Activated naive CD4-positive, alpha-beta T cell treated with anti-CD3 and anti-CD28 coated beads for 36 hours (primary cell): ENCODE measurements at regions of chr12 and their contacts with region 1.

Region 1: DNA sequence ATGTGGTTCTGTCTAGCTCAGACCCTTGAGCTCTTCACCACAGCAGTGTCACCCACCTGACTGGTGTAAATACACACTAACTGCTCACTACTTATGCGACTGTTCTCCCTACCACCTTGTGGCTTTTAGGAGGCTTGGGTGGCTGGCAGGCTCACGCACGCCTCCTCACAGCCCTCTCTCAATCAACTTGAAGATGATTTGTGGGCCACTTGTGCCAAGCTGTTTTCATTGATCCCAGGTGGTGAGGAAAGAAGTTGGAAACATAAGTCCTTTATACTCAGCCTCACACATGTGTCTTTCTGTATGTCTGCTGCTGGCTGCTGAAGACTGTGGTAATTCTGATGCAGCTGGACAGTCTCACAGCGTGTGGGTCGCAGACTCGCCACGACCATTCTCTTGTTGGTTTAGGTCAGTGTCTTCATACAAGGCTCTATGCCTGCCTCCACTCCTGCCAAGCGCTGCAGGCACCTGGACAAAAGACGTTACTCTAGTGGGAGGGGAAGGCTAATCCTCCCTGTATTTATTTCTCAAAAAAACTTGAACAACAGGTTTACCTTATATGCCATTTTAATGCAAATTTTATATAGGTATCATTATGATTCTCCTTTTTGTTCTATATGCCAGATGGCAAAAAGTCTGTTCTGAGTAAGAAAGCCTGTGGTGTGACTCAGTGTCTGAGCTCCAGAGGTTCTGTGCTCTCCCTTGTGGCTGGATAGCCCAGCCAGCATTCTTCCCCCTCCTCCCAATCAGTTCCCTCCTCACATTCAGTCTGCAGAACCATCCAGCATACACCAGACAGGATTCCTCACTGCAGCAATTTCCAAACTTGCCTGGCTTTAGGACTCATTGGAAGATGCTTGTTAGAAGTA is 115.6 kb downstream of the DIP2B start:
- DNase-seq: peak; percentile 63
- H3K4me3 Mint-ChIP-seq: no peak overlapping the region
- H3K27ac Mint-ChIP-seq: peak overlapping the region; percentile 70
- H3K4me1 Mint-ChIP-seq: peaks cover 74% of the 10 kb centered on the region
- H3K27me3 Mint-ChIP-seq: no peaks in the 10 kb centered on the region

Region 2: DNA sequence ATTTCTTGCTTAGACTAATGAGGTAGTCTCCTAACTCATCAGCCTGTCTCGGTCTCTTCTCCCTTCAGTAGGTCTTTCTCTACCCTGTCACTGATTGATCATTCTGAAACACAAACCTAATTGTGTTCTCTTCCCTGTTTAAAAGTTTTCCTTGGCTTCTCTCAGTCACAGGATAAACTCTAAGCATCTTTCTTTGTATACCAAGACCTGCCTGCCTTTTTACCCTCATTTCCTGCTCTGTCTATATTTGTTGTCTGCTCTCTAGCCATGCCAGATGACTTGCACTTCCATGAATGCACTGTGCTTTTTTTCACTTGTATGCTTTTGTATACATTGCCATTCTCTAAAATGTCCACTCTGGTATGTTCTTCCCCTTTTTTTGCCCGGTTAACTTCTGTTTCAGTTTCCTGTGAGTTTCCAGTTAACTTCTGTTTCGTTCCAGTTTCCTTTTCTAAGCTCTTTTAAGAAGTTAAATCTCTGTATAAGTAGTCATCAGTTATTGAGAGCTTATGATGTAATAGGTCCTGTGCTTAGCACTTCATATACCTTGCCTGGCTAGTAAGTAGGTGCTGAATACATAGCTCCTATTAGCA is 102.8 kb before region 1 on chr12:
- CTCF ChIA-PET with region 1: interaction called, 3 read pairs
- intact Hi-C with region 1: loop called (anchors 1 kb)
- DNase-seq: peak; percentile 23
- H3K4me3 Mint-ChIP-seq: no peak overlapping the region
- H3K27ac Mint-ChIP-seq: no peak overlapping the region
- H3K4me1 Mint-ChIP-seq: peaks cover 69% of the 10 kb centered on the region
- H3K27me3 Mint-ChIP-seq: no peaks in the 10 kb centered on the region

Region 3: GRCh38 chr12:50542448-50542847 is 77.9 kb before region 1 on chr12:
- CTCF ChIA-PET with region 1: interaction called, 4 read pairs
- intact Hi-C with region 1: loop called (anchors 1 kb)
- DNase-seq: peak; percentile 64
- H3K4me3 Mint-ChIP-seq: no peak overlapping the region
- H3K27ac Mint-ChIP-seq: peak overlapping the region; percentile 85
- H3K4me1 Mint-ChIP-seq: peaks cover 55% of the 10 kb centered on the region
- H3K27me3 Mint-ChIP-seq: no peaks in the 10 kb centered on the region

Region 4: DNA sequence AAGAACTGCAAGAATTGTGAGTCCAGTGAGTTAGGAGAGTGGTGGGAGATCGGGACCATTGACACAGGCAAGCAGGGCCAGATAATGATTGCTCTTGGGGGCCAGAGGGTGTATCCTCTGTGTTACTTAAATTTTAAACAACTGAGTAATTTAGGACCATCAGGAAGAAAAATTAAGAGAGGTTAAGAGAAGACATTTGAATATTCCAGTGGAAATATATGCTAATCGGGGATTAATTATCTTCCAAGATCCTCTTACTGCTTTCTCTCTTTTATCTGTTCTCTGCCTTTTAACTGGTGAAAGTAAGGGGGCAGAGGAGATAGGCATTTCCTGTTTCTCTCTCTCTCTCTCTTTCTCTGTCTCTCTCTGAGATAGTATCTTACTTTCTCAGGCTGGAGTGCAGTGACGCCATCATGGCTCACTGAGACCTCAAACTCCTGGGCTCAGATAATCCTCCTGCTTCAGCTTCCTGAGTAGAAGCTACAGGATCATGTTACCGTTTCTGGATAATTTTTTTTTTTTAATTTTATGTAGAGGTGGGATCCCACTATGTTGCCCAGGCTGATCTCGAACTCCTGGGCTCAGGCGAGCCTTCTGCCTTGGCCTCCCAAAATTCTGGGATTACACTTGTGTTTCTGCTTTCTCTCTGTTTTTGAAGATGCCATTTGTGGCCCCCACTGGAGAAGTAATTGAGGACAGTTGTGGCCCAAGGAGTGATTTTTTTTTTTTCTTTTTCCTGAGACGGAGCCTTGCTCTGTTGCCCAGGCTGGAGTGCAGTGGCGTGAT is 30.5 kb before region 1 on chr12:
- CTCF ChIA-PET with region 1: interaction called, 3 read pairs
- intact Hi-C with region 1: loop called (anchors 5 kb)
- DNase-seq: peak; percentile 57
- H3K4me3 Mint-ChIP-seq: peak overlapping the region; percentile 10
- H3K27ac Mint-ChIP-seq: peak overlapping the region; percentile 64
- H3K4me1 Mint-ChIP-seq: peaks cover 45% of the 10 kb centered on the region
- H3K27me3 Mint-ChIP-seq: no peaks in the 10 kb centered on the region

Region 5: DNA sequence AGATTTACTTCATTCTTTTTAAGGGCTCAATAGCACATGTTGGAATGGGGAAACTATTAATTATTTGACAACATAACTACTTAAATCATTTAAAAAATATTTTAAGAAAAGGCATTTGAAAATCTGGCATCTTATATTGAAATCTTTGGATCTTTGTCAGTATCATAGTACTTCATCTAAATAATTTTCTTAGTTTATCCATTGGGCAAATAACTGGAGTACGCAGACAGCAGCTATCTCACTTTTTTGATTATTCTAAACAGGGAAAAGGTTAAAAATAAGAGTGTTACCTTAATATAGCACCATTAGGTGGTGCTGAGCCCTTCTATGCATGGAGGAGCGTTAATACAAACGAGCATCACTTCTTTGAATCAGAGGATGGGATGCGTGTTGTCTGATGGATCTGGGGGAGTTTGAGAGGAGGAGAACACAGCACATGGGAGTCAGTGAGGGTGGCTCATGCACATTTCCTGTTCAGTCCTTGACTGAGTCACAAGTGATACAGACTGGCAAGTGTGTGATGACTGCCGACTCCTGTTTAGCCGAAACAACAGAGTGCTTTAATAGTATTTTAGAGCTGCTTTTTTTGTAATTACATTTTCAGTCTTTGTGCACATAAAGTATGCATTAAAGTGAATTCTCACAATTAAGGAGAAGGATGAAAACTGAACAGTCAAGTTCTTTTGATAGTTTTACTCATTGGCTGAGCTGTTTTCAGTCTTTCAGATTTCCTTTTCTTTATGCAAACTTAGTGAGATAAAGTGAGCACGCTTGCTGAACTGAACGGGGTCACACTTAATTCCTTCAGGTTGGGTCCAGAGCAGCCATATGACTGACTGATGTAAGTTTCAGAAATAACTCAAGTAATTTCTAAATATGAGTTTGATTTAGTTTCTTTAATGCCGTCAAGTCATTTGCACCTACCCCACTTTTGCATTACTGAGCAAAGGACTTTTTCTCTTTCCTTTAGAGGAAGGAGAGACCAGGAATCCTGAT is 22.8 kb before region 1 on chr12:
- CTCF ChIA-PET with region 1: interaction called, 3 read pairs
- intact Hi-C with region 1: loop called (anchors 1 kb)
- DNase-seq: peak; percentile 85
- H3K4me3 Mint-ChIP-seq: peak overlapping the region; percentile 57
- H3K27ac Mint-ChIP-seq: peak overlapping the region; percentile 95
- H3K4me1 Mint-ChIP-seq: peaks cover 49% of the 10 kb centered on the region
- H3K27me3 Mint-ChIP-seq: no peaks in the 10 kb centered on the region

Region 6: GRCh38 chr12:50637870-50638481 is 17.6 kb after region 1 on chr12:
- CTCF ChIA-PET with region 1: interaction called, 4 read pairs
- intact Hi-C with region 1: loop called (anchors 2 kb)
- DNase-seq: no peak
- H3K4me3 Mint-ChIP-seq: no peak overlapping the region
- H3K27ac Mint-ChIP-seq: peak overlapping the region; percentile 47
- H3K4me1 Mint-ChIP-seq: peaks cover 62% of the 10 kb centered on the region
- H3K27me3 Mint-ChIP-seq: no peaks in the 10 kb centered on the region

Region 7: DNA sequence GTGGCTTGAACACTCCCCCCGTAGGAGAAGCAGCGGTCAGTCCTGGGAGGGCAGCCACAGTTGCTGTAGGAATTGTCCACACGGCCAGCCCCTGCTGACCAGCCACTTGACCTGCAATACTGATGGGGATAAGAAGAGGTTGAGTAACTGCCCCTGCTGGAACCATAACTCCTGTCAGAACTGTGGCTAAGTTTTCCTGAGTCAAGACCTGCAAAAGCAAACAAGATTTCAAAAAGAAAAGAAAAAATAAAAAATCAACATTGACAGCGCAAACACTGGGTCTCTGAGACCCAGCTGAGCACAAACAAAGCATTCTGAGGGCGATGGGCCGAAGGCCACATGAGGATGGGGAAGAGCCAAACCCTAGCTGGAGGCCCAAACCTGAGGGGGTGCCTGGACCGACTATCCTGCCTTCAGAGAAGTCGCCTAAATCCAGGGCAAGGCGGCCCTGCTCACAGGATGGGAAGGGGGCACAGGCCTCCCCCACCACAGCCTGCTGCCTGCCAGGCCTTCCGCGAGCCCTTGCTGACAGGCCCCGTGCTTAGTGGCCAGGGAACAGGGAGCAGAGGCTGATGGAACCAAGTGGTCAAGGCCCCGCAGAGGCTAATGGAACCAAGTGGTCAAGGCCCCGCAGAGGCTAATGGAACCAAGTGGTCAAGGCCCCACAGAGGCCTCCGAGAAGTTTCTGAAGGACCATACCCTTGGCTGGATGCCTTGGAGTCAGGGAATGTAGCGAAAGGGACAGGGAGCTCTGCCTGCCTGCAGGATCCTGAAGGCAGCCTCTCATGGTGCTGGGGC is 578.4 kb after region 1 on chr12:
- CTCF ChIA-PET with region 1: no interaction called
- intact Hi-C with region 1: no loop called
- DNase-seq: no peak
- H3K4me3 Mint-ChIP-seq: no peak overlapping the region
- H3K27ac Mint-ChIP-seq: no peak overlapping the region
- H3K4me1 Mint-ChIP-seq: peaks cover 13% of the 10 kb centered on the region
- H3K27me3 Mint-ChIP-seq: no peaks in the 10 kb centered on the region